ENCODE measurements at regions of chr17 and their contacts with region 1.

Region 1: DNA sequence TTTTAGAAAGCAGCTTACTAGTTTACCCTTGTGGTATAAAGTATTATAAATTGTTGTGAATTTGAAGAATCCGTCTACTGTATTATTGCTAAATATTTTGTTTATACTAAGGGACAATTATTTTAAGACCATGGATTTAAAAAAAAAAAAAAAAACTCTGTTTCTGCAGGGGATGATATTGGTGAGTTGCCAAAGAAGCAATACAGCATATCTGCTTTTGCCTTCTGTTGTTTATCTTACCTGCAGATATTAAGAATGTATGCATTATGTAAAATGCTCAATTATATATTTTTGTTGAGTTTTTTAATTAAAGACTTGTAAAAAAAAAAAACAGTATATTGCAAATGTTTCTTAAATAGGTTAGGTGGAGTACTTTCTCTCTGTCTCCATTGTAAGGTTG is 19.4 kb downstream of the WSB1 start:
- DNase-seq: no peak
- ATAC-seq: no peak
- H3K4me3 ChIP-seq: no peak overlapping the region
- H3K27ac ChIP-seq: no peak overlapping the region
- H3K4me1 ChIP-seq: no peaks in the 10 kb centered on the region
- H3K27me3 ChIP-seq: no peaks in the 10 kb centered on the region
- CTCF ChIP-seq: no peak

Region 2: DNA sequence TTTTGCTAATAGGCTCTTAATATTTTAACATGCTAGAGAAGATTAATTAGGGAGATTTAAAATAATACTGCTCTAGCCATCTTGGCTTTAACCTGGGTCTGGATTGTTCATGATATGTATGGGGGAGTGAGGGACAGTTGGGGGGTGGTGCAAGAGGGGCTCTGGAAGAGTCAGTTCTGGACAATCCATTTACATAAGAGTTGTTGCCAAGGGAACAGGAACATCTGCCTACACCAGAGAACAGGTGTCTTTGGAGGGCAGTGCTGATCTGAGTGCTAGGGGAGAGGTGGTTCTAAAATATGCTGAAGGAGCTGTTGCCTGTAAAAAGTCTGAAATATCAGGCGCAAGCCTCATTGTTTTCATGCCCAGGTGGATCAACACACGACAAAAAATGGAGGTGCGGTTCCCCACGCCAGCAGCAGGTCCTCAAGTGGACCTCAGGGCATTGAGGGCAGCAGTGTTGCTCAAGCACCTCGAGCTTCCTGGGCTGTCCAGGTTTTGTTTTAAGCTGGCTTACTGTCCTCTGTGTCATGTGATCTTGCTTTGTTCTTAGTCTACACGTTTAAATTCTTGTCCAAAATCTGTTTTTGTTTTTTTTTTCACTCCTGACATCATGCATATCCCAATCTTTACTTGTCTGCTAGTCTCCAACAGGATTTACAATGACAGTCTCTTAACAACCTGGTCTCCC is 44.8 kb before region 1 on chr17:
- CTCF ChIA-PET with region 1: no interaction called
- POLR2A ChIA-PET with region 1: interaction called, 16 read pairs
- in situ Hi-C with region 1: no loop called
- intact Hi-C with region 1: no loop called
- DNase-seq: no peak
- ATAC-seq: no peak
- H3K4me3 ChIP-seq: no peak overlapping the region
- H3K27ac ChIP-seq: no peak overlapping the region
- H3K4me1 ChIP-seq: no peaks in the 10 kb centered on the region
- H3K27me3 ChIP-seq: no peaks in the 10 kb centered on the region
- CTCF ChIP-seq: no peak

Region 3: GRCh38 chr17:27282054-27282551 is 31.2 kb before region 1 on chr17:
- CTCF ChIA-PET with region 1: no interaction called
- POLR2A ChIA-PET with region 1: no interaction called
- in situ Hi-C with region 1: no loop called
- intact Hi-C with region 1: no loop called
- DNase-seq: no peak
- ATAC-seq: no peak
- H3K4me3 ChIP-seq: no peak overlapping the region
- H3K27ac ChIP-seq: no peak overlapping the region
- H3K4me1 ChIP-seq: no peaks in the 10 kb centered on the region
- H3K27me3 ChIP-seq: no peaks in the 10 kb centered on the region
- CTCF ChIP-seq: no peak

Region 4: GRCh38 chr17:27332485-27333409 is 19.4 kb after region 1 on chr17:
- CTCF ChIA-PET with region 1: no interaction called
- POLR2A ChIA-PET with region 1: no interaction called
- in situ Hi-C with region 1: no loop called
- intact Hi-C with region 1: no loop called
- DNase-seq: peak; percentile 89
- ATAC-seq: peak; percentile 98
- H3K4me3 ChIP-seq: peak overlapping the region; percentile 55 to 64
- H3K27ac ChIP-seq: peak overlapping the region; percentile 83
- H3K4me1 ChIP-seq: peaks cover 12% of the 10 kb centered on the region
- H3K27me3 ChIP-seq: no peaks in the 10 kb centered on the region
- CTCF ChIP-seq: peak; percentile 91

Measured in Panc1 (cell line).